ENCODE measurements at regions of chr3 and their contacts with region 1.

Region 1: DNA sequence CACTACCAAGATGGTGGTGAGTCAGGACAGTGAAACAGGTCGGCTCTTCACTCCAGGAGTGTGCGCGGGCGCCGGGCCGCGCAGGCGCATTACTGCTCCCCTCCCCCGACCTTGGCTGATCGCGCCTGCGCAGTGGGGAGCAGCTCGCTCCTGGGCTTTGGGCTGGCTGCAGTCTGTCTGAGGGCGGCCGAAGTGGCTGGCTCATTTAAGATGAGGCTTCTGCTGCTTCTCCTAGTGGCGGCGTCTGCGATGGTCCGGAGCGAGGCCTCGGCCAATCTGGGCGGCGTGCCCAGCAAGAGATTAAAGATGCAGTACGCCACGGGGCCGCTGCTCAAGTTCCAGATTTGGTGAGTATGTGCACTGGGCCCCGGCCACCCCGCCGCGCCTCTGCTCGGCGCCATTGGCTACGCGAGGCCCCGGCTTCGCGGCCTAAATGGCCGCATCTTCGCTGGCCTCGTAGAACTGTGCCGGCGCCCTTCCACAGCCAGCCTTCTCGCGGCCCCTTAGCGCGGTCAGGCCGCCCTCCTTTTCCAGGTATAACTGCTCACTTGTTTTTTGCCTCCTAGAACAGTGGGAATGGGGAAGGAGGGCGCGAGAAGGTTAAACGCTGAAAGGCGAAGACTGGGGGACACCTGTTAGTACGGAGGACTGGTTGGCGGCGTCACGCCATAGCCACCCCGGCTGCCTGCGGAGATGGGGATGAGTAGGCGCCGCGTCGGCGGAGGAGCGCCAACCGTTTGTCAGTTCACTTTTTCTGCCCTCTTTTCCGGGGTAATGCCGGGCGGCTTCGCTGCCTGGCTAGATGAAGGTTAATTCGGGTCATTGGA is at the start of gene SELENOT:
- DNase-seq: peak; percentile 96
- H3K4me3 Mint-ChIP-seq: peak within 1 kb of the TSS; percentile 99
- H3K27ac Mint-ChIP-seq: peak within 1 kb of the TSS; percentile 99
- H3K4me1 Mint-ChIP-seq: peaks cover 80% of the 10 kb centered on the region
- H3K27me3 Mint-ChIP-seq: peaks cover 2% of the 10 kb centered on the region
- total RNA-seq, gene SELENOT: 139 and 140 TPM in 2 replicates

Region 2: GRCh38 chr3:150582620-150583019 is 20.7 kb before region 1 on chr3:
- intact Hi-C with region 1: loop called (anchors 1 kb)
- DNase-seq: no peak
- H3K4me3 Mint-ChIP-seq: no peak overlapping the region
- H3K27ac Mint-ChIP-seq: peak overlapping the region; percentile 74
- H3K4me1 Mint-ChIP-seq: peaks cover 14% of the 10 kb centered on the region
- H3K27me3 Mint-ChIP-seq: no peaks in the 10 kb centered on the region

Region 3: DNA sequence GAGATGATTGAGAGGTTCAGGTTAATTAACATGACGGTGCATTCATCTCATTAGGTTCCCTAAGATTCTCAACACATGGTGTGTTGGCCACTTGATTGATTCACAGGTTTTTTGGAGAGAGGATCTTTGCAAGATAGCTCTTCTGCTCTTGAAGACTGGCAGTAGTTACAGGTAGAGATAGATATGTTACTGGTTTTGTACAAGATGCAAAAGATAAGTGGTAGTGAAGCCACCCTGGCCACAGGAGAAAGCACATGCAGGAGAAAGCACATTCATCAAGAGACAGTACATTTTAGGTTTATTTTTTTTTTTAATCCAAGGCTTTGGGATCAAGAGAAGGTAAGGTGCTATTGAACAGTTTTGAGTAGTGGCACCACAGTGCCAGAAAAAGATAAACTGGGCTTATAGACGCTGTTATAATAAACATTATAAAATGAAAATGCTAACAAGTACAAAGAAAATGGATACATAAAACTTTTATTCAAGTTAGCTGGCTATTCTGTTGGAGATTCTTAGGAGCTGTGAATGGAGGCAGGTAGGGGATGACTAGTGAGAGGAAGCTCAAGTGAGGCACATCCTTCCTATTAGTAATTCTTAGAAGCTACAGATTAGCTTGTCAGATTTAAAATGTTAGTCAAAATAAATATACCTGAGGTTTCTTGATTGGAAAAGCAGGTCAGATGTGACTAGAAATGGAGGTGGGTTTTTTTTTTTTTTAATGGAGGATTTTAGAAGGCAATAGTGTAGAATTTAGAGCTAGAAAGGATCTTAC is 10.5 kb after region 1 on chr3:
- intact Hi-C with region 1: loop called (anchors 2 kb)
- DNase-seq: no peak
- H3K4me3 Mint-ChIP-seq: no peak overlapping the region
- H3K27ac Mint-ChIP-seq: peak overlapping the region; percentile 35
- H3K4me1 Mint-ChIP-seq: peaks cover 56% of the 10 kb centered on the region
- H3K27me3 Mint-ChIP-seq: no peaks in the 10 kb centered on the region

Region 4: DNA sequence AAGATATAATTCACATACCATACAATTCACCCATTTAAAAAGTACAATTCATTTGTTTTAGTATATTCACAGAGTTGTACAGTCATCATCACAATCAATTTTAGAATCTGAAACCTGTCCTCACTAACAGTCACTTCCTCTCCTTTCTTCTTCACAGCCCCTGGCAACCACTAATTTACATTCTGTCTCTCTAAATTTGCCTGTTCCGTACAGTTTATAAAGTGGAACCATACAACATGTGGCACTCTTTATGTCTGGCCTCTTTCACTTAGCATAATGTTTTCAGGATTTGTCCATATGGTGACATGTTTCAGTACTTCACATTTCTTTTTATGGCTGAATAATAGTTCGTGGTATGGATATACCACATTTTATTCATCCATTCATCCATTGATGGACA is 77.7 kb after region 1 on chr3:
- intact Hi-C with region 1: loop called (anchors 5 kb)
- DNase-seq: no peak
- H3K4me3 Mint-ChIP-seq: no peak overlapping the region
- H3K27ac Mint-ChIP-seq: peak overlapping the region; percentile 7
- H3K4me1 Mint-ChIP-seq: peaks cover 24% of the 10 kb centered on the region
- H3K27me3 Mint-ChIP-seq: peaks cover 4% of the 10 kb centered on the region

Region 5: DNA sequence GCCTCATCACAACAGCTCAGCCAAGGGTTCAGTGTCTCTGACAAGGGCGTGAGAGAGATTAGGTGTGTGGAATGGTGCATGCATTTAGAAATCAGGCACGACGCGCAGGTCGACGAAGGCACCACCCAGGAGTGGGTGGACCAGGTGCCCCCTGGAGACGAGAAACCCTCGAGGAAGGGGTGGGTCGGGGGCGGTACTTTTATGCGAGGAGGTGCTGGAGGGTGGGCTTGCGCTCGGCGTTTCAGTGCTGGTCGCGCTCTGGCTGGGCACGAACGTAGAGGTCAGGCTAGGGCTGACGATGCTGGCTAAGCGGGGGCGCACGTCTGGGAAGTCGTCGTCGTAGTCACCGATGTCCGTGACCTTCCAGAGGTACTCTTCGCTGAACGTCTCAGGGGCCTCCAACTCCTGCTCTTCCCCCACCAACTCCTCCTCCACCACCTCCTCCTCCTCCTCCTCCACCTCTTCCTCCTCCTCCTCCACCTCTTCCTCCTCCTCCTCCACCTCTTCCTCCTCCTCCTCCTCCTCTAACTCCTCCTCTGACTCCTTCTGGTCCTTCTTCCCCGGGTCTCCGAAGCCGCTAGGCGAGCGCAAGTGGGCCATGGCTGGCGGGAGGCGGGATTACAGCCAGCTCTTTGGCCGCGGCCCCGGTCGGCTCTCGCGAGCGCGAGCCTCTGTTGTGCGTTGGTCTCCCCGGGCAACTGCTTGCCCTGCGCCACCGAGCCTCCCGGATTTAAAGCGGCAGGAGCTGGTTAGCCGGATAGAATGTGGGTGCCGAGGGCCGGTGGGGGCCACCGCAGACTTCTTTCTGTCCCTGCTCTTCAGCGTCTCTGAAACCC is 100.2 kb after region 1 on chr3 and contains the start of gene ERICH6:
- intact Hi-C with region 1: loop called (anchors 1 kb)
- DNase-seq: peak; percentile 81
- H3K4me3 Mint-ChIP-seq: peak within 1 kb of the TSS; percentile 93
- H3K27ac Mint-ChIP-seq: peak within 1 kb of the TSS; percentile 99
- H3K4me1 Mint-ChIP-seq: peaks cover 23% of the 10 kb centered on the region
- H3K27me3 Mint-ChIP-seq: no peaks in the 10 kb centered on the region
- total RNA-seq, gene ERICH6: not detected in 2 replicates

Measured in activated T-helper 1 cell treated with anti-CD3 and anti-CD28 coated beads, Interleukin-12 subunit alpha, Interleukin-12 subunit beta, Interleukin-2, Interleukin-4 antibody, amounts not matched to agents 30 ng/mL and 10 ng/mL and 1 ng/mL, durations not matched to agents 14 hours and 24 hours and 36 hours (primary cell).